ENCODE measurements at regions of chr3 and their contacts with region 1.

Region 1: DNA sequence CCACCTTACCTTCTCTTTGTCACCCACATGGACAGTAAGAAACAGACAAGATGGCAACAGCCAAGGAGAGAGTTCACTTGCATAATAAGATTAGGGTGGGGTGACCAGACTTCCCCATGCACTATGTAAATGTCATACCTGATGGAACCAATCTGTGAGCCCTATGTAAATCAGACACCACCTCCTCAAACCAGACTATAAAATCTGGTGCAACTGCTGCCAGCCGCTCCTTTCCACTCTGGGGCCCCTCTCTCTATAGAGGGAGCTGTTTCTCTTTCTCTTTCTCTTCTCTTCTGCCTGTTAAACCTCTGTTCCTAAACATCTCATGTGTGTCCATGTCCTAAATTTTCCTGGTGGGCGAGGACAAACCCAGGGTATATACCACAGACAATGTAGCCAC is 405.5 kb upstream of the CNTN4 start:
- DNase-seq: no peak

Region 2: GRCh38 chr3:1734494-1735122 is 41.5 kb after region 1 on chr3:
- intact Hi-C with region 1: loop called in 1 of 2 experiments (anchors 5 kb)
- DNase-seq: no peak